Natural killer cell (primary cell): ENCODE measurements at regions of chr19 and their contacts with region 1.

Region 1: GRCh38 chr19:9140159-9140874 is at the start of gene ZNF317:
- DNase-seq: peak; percentile 85 to 96
- ATAC-seq: peak; percentile 95 to 96 (median 96)
- H3K4me3 ChIP-seq: peak within 1 kb of the TSS; percentile 97
- H3K4me3 Mint-ChIP-seq: peak within 1 kb of the TSS; percentile 98
- H3K27ac ChIP-seq: peak within 1 kb of the TSS; percentile 91
- H3K27ac Mint-ChIP-seq: peak within 1 kb of the TSS; percentile 95 to 99
- H3K4me1 ChIP-seq: peaks cover 13% of the 10 kb centered on the region
- H3K4me1 Mint-ChIP-seq: peaks cover 35 to 46% of the 10 kb centered on the region in 2 donors
- H3K27me3 ChIP-seq: no peaks in the 10 kb centered on the region
- H3K27me3 Mint-ChIP-seq: peaks cover 0 to 2% of the 10 kb centered on the region in 2 donors
- CTCF ChIP-seq: no peak
- total RNA-seq, gene ZNF317: 78.0 to 91.2 (median 82.8) TPM

Region 2: GRCh38 chr19:9189538-9189937 is 49.2 kb after region 1 on chr19:
- intact Hi-C with region 1: no loop called
- DNase-seq: no peak
- ATAC-seq: no peak
- H3K4me3 ChIP-seq: no peak overlapping the region
- H3K4me3 Mint-ChIP-seq: no peak overlapping the region
- H3K27ac ChIP-seq: no peak overlapping the region
- H3K27ac Mint-ChIP-seq: no peak overlapping the region
- H3K4me1 ChIP-seq: no peaks in the 10 kb centered on the region
- H3K4me1 Mint-ChIP-seq: no peaks in the 10 kb centered on the region
- H3K27me3 ChIP-seq: no peaks in the 10 kb centered on the region
- H3K27me3 Mint-ChIP-seq: peaks cover 26 to 46% of the 10 kb centered on the region in 2 donors
- CTCF ChIP-seq: no peak

Region 3: DNA sequence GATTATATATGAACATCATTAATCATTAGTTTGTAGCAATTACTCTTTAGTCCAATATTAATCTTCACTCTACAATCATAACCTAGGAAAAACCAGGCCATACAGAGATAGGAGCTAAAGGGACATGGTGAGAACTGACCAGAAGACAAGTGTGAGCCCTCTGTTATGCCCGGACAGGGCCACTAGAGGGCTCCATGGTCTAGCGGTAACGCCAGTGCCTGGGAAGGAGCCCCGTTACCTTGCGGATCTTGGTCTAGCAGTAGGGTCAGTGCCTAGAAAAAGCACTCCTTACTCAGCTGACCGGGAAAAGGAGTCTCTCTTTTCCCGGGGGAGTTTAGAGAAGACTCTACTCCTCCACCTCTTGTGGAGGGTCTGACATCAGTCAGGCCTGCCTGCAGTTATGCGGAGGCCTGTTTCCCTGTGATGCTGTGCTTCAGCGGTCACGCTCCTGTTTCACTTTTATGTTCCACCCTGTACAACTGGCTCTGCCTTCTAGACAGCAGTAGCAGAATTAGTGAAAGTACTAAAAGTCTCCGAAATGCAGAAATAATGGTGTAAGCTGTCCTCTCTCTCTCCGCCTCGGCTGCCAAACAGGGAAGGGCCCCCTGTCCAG is 65.3 kb after region 1 on chr19:
- intact Hi-C with region 1: loop called (anchors 1 kb)
- DNase-seq: peak; percentile 55 to 75
- ATAC-seq: peak; percentile 64 to 81 (median 80)
- H3K4me3 ChIP-seq: no peak overlapping the region
- H3K4me3 Mint-ChIP-seq: no peak overlapping the region
- H3K27ac ChIP-seq: no peak overlapping the region
- H3K27ac Mint-ChIP-seq: peak overlapping the region in 1 of 2 donors; percentile 58
- H3K4me1 ChIP-seq: peaks cover 5% of the 10 kb centered on the region
- H3K4me1 Mint-ChIP-seq: peaks cover 6 to 7% of the 10 kb centered on the region in 2 donors
- H3K27me3 ChIP-seq: no peaks in the 10 kb centered on the region
- H3K27me3 Mint-ChIP-seq: peaks cover 15 to 19% of the 10 kb centered on the region in 2 donors
- CTCF ChIP-seq: peak; percentile 89

Region 4: GRCh38 chr19:9309139-9309973 is 169.0 kb after region 1 on chr19 and contains the start of gene ZNF699:
- intact Hi-C with region 1: loop called (anchors 5 kb)
- DNase-seq: peak; percentile 96 to 100
- ATAC-seq: peak; percentile 89 to 95 (median 90)
- H3K4me3 ChIP-seq: peak within 1 kb of the TSS; percentile 94
- H3K4me3 Mint-ChIP-seq: peak within 1 kb of the TSS; percentile 89
- H3K27ac ChIP-seq: peak within 1 kb of the TSS; percentile 90
- H3K27ac Mint-ChIP-seq: peak within 1 kb of the TSS; percentile 96 to 99
- H3K4me1 ChIP-seq: peaks cover 17% of the 10 kb centered on the region
- H3K4me1 Mint-ChIP-seq: peaks cover 30 to 46% of the 10 kb centered on the region in 2 donors
- H3K27me3 ChIP-seq: no peaks in the 10 kb centered on the region
- H3K27me3 Mint-ChIP-seq: no peaks in the 10 kb centered on the region
- CTCF ChIP-seq: no peak
- total RNA-seq, gene ZNF699: 13.4 to 15.3 (median 15.2) TPM

Region 5: DNA sequence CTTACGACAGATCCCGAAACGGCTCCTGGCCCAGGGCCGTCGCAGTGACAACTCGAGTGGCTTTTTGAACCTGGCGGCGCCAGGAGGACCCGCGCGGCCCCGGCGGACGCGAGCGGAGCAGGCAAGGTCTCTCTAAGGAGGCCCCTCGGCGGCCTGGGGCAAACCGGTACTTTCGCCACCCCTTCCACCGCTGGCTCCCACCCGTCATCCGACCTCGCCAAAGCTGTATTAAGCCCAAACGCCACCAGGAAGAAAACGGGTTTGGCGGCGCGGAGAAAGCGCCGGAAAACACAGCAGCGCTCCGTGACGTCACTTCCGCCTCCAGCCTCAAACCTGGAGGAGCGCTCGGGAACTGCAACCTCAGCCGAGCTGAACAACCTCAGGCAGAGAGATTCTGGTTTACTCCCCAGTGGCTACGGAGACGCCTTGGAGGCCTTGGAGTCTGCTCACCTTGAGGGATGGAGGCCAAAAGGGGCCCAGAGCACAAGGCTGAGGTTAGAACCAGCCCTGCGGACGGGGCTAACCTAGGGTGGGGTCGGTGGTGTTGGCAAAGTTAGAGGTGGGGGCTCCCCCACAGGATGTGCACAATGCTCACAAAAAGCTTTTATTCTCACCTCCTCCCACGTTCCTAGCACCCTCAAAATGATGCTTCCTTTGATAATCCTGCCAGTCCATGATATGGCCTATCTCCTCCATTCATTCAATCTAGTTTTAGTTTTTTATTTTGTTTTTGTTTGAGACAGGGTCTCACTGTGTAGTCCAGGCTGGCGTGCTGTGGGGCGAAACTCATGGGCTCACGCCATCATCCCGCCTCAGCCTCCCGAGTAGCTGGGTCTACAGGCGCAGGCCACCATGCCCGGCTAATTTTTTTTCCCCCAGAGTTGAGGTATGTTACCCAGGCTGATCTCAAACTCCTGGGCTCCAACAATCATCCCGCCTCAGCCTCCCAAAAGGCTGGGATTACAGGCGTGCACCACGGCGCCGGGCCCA is 295.3 kb after region 1 on chr19 and contains the start of gene ZNF266:
- intact Hi-C with region 1: loop called (anchors 10 kb)
- DNase-seq: peak; percentile 91 to 98
- ATAC-seq: peak; percentile 81 to 91 (median 84)
- H3K4me3 ChIP-seq: peak within 1 kb of the TSS; percentile 73
- H3K4me3 Mint-ChIP-seq: peak within 1 kb of the TSS; percentile 98
- H3K27ac ChIP-seq: peak within 1 kb of the TSS; percentile 91
- H3K27ac Mint-ChIP-seq: peak within 1 kb of the TSS; percentile 97
- H3K4me1 ChIP-seq: peaks cover 14% of the 10 kb centered on the region
- H3K4me1 Mint-ChIP-seq: peaks cover 53 to 59% of the 10 kb centered on the region in 2 donors
- H3K27me3 ChIP-seq: no peaks in the 10 kb centered on the region
- H3K27me3 Mint-ChIP-seq: no peaks in the 10 kb centered on the region
- CTCF ChIP-seq: peak; percentile 75
- total RNA-seq, gene ZNF266: 89.9 to 108 (median 104) TPM

Region 6: DNA sequence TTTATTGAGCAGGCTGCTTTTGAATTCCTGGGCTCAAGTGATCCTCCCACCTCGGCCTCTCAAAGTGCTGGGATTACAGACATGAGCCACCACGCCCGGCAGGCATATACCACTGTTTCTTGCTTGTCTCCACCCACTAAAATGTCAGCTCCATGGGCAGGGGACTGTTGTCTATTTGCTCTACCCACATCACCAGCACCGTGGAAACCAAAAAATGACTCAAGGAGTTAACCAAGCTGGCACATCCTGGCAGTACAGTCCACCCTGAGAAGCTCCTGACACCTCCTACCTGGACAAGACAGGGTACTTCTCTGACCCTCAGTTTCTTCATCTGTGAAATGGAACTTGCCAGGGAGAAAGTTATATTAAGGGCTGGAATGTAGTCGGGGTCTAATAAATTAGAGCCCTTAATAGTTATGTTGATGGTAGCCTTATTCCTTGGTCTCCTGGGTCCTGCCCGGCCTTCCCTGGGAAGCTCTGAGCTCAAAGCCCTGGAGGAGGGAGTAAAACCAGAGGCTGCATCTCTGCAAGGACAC is 886.9 kb after region 1 on chr19:
- intact Hi-C with region 1: loop called (anchors 5 kb)
- DNase-seq: no peak
- ATAC-seq: no peak
- H3K4me3 ChIP-seq: no peak overlapping the region
- H3K4me3 Mint-ChIP-seq: no peak overlapping the region
- H3K27ac ChIP-seq: no peak overlapping the region
- H3K27ac Mint-ChIP-seq: no peak overlapping the region
- H3K4me1 ChIP-seq: peaks cover 6% of the 10 kb centered on the region
- H3K4me1 Mint-ChIP-seq: no peaks in the 10 kb centered on the region
- H3K27me3 ChIP-seq: no peaks in the 10 kb centered on the region
- H3K27me3 Mint-ChIP-seq: peaks cover 9 to 10% of the 10 kb centered on the region in 2 donors
- CTCF ChIP-seq: no peak